Naive thymus-derived CD4-positive, alpha-beta T cell (primary cell): ENCODE measurements at regions of chr2 and their contacts with region 1.

Region 1: GRCh38 chr2:216362730-216363129 is 9.6 kb downstream of the MARCHF4 start:
- DNase-seq: no peak
- ATAC-seq: no peak
- H3K4me3 ChIP-seq: no peak overlapping the region
- H3K4me3 Mint-ChIP-seq: no peak overlapping the region
- H3K27ac ChIP-seq: no peak overlapping the region
- H3K27ac Mint-ChIP-seq: no peak overlapping the region
- H3K4me1 ChIP-seq: peaks cover 0 to 5% of the 10 kb centered on the region in 2 donors
- H3K4me1 Mint-ChIP-seq: peaks cover 0 to 8% (median 5%) of the 10 kb centered on the region in 7 donors
- H3K27me3 ChIP-seq: no peaks in the 10 kb centered on the region
- H3K27me3 Mint-ChIP-seq: peaks cover 0 to 85% (median 6%) of the 10 kb centered on the region in 5 donors

Region 2: DNA sequence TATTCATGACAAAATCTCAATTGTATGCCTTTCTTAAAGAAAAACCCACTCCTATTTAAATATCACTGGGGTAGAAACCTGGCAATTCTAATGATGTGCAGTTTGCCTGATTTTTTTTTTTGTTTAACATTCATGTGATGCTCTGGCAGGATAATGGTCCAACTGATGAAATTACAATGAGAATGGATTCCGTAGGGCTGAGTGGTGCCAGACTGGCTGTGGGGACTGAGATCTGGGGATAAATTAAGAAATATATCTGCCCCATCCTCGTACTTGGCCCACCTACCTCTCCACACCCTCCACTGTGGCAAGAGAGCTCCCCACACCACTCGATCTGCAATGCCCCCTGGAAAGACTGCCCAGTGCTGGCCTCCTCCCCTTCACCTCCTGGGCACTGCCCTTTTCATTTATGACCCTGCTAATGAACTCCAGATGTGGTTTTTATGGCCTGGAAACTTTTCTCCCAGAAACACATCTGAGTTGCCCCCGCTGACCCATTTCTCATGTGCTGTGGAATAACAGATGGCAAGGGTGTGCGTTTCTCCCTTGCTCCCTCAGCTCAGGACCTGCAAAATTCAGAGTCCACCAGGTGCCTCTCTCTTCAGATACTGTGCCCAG is 103.0 kb after region 1 on chr2:
- CTCF ChIA-PET with region 1: no interaction called
- POLR2A ChIA-PET with region 1: interaction called, 14 read pairs
- intact Hi-C with region 1: no loop called
- DNase-seq: no peak
- ATAC-seq: no peak
- H3K4me3 ChIP-seq: no peak overlapping the region
- H3K4me3 Mint-ChIP-seq: no peak overlapping the region
- H3K27ac ChIP-seq: no peak overlapping the region
- H3K27ac Mint-ChIP-seq: no peak overlapping the region
- H3K4me1 ChIP-seq: no peaks in the 10 kb centered on the region
- H3K4me1 Mint-ChIP-seq: no peaks in the 10 kb centered on the region
- H3K27me3 ChIP-seq: no peaks in the 10 kb centered on the region
- H3K27me3 Mint-ChIP-seq: no peaks in the 10 kb centered on the region